Ascending aorta (tissue), 2 donors: ENCODE measurements at regions of chr11 and their contacts with region 1.

Region 1: DNA sequence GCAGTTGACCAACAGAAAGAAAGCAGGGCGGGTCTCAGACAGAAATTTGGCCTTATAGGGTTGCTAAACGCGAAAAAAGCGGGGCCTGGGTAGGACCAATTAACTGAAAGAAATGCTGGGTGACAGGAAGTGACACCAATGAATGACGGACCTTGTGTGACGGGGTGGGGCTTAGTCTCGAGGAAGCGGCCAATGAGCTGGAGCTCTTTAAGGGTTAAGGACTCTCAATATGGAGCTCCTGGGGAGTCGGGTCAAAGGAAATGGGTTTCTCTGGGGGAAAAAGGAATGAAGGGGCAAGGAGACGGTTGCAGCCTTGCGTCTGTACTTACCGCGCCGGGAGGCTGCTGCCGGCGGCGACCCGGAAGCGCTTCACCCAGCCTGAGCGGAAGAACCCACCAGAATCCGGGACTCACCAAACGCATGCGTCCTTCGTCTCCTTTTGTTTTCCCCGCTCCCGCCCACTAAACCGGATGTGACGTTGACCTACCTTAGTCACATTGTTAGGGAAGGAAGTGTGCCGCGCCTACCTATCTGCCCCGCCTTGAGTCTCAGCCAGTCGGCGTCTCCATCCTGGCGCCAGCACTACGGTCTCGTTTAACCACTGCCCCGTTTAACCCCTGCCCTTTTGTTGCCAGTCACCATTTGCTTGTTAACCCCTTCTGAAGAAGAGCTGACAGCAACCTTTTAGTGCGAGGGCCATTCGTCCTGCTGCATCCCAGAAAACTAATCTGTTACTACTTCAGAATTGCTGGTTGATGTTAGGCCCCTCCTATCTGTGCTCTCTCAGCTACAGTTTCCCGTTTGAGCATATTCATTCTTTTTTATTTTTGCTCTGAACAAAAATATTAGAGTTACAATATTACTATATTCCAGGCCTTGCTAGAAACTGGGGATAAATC is at the start of gene ANAPC15:
- DNase-seq: peak; percentile 98 to 100
- H3K4me3 ChIP-seq: peak within 1 kb of the TSS; percentile 69 to 77
- H3K27ac ChIP-seq: peak within 1 kb of the TSS; percentile 95 to 97
- H3K4me1 ChIP-seq: peaks cover 3 to 10% of the 10 kb centered on the region in 2 donors
- H3K27me3 ChIP-seq: no peaks in the 10 kb centered on the region
- CTCF ChIP-seq: no peak
- total RNA-seq, gene ANAPC15: not detected

Region 2: GRCh38 chr11:71787098-71787823 is 325.3 kb before region 1 on chr11:
- intact Hi-C with region 1: loop called (anchors 2 kb)
- DNase-seq: peak in 1 of 2 donors; percentile 97
- H3K4me3 ChIP-seq: peak overlapping the region; percentile 58 to 71
- H3K27ac ChIP-seq: peak overlapping the region; percentile 90 to 93
- H3K4me1 ChIP-seq: no peaks in the 10 kb centered on the region
- H3K27me3 ChIP-seq: no peaks in the 10 kb centered on the region
- CTCF ChIP-seq: no peak

Region 3: GRCh38 chr11:71928737-71929452 is 183.7 kb before region 1 on chr11 and contains the start of gene RNF121:
- intact Hi-C with region 1: loop called (anchors 1 kb)
- DNase-seq: peak; percentile 90 to 98
- H3K4me3 ChIP-seq: peak within 1 kb of the TSS; percentile 85 to 96
- H3K27ac ChIP-seq: peak within 1 kb of the TSS; percentile 74 to 88
- H3K4me1 ChIP-seq: peaks cover 0 to 11% of the 10 kb centered on the region in 2 donors
- H3K27me3 ChIP-seq: no peaks in the 10 kb centered on the region
- CTCF ChIP-seq: no peak
- total RNA-seq, gene RNF121: 5.0 TPM

Region 4: GRCh38 chr11:72040726-72041441 is 71.7 kb before region 1 on chr11:
- intact Hi-C with region 1: loop called (anchors 2 kb)
- DNase-seq: peak; percentile 82 to 97
- H3K4me3 ChIP-seq: peak overlapping the region; percentile 59 to 68
- H3K27ac ChIP-seq: peak overlapping the region; percentile 97
- H3K4me1 ChIP-seq: peaks cover 8 to 48% of the 10 kb centered on the region in 2 donors
- H3K27me3 ChIP-seq: no peaks in the 10 kb centered on the region
- CTCF ChIP-seq: no peak

Region 5: GRCh38 chr11:72080256-72080974 is 32.2 kb before region 1 on chr11 and contains the starts of genes LRRC51 and NUMA1:
- intact Hi-C with region 1: loop called (anchors 1 kb)
- DNase-seq: peak; percentile 100
- H3K4me3 ChIP-seq: peak within 1 kb of the TSS; percentile 82 to 90
- H3K27ac ChIP-seq: peak within 1 kb of the TSS; percentile 89 to 91
- H3K4me1 ChIP-seq: peaks cover 5 to 14% of the 10 kb centered on the region in 2 donors
- H3K27me3 ChIP-seq: no peaks in the 10 kb centered on the region
- CTCF ChIP-seq: no peak
- total RNA-seq, gene LRRC51: 12.9 TPM
- total RNA-seq, gene NUMA1: 289 TPM

Region 6: GRCh38 chr11:72278911-72279310 is 166.3 kb after region 1 on chr11:
- intact Hi-C with region 1: no loop called
- DNase-seq: no peak
- H3K4me3 ChIP-seq: no peak overlapping the region
- H3K27ac ChIP-seq: no peak overlapping the region
- H3K4me1 ChIP-seq: no peaks in the 10 kb centered on the region
- H3K27me3 ChIP-seq: no peaks in the 10 kb centered on the region
- CTCF ChIP-seq: no peak

Region 7: DNA sequence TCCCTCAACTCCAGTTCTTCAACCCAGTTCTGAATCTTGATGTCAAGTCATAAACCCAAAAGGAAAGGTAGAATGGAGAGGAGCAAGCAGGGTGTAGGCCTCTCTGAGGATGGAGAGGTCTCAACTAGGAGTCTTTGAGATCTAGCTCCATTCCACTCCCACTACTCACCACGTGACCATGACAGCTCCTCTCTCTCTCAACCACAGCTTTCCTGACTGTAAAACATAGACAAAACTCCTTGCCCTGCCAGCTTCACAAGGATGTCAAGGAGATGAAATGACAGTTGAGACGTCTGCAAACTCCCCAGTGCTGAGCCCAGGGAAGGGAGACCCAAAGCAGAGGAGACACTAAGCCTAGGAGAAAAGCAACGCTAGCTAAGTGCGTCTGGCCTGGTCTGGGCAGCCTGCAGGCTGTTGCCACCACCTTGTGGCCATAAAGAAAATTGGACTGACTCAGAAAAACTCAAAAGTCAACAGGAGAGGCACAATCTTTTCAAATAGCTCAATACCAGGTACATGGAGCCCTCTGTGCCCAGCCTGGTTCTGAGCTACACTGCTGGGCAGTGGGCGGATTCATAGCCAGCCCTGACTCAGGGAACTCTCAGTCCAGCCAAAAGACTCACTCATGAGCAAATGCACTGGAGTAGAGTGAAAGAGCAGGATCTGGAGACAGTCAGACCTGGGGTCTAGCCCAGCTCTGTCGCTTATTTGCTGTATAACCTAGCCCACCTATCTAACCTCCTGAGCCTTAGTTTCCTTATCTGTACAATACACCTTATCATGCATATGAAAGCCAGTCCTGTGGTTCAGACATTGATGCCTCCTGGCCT is 318.4 kb after region 1 on chr11:
- intact Hi-C with region 1: loop called (anchors 5 kb)
- DNase-seq: no peak
- H3K4me3 ChIP-seq: no peak overlapping the region
- H3K27ac ChIP-seq: no peak overlapping the region
- H3K4me1 ChIP-seq: peaks cover 0 to 13% of the 10 kb centered on the region in 2 donors
- H3K27me3 ChIP-seq: no peaks in the 10 kb centered on the region
- CTCF ChIP-seq: peak; percentile 51 to 69 (median 56)